Activated CD4-positive, alpha-beta memory T cell treated with anti-CD3 and anti-CD28 coated beads for 36 hours (primary cell): ENCODE measurements at regions of chr9 and their contacts with region 1.

Region 1: DNA sequence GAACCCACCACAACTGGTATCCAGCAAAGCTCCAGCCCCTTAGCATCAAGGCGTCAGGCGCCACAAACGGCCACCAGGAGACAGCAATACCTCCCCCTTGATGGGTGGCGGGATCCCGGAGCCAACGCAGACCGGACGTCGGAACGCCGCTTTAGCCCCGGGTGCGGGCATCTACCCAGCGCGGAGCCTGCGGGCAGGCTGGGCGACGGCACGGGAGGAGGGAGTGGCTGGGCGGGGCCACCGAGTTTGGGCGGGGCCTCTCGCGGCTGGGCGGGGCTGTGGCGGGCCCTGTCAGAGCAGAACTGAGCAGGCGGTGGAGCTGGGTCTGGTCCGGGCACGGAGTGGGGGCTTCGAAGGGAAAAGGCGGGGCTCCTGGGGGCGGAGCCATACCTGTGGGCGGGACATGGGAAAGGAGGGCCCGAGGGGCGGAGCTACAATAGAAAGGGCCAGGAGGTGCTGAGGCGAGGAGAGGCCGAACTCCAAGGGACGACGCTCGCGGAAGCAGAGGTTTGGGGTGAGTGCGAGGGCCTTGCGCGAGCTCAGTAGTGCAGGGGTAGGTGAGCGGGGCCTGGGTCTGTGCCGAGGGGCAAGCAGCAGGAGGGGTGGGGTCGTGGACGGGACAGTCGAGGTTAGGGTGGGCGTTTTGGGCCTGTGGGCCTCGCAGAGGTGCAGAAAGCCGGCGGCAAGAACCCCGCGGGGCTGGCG is 40.2 kb upstream of the GARNL3 start:
- DNase-seq: peak; percentile 91
- H3K4me3 Mint-ChIP-seq: peak overlapping the region; percentile 78
- H3K27ac Mint-ChIP-seq: peak overlapping the region; percentile 79
- H3K4me1 Mint-ChIP-seq: peaks cover 32% of the 10 kb centered on the region
- H3K27me3 Mint-ChIP-seq: peaks cover 10% of the 10 kb centered on the region

Region 2: GRCh38 chr9:127206666-127207065 is 17.7 kb before region 1 on chr9:
- CTCF ChIA-PET with region 1: no interaction called
- POLR2A ChIA-PET with region 1: no interaction called
- intact Hi-C with region 1: no loop called
- DNase-seq: no peak
- H3K4me3 Mint-ChIP-seq: no peak overlapping the region
- H3K27ac Mint-ChIP-seq: no peak overlapping the region
- H3K4me1 Mint-ChIP-seq: no peaks in the 10 kb centered on the region
- H3K27me3 Mint-ChIP-seq: no peaks in the 10 kb centered on the region

Region 3: DNA sequence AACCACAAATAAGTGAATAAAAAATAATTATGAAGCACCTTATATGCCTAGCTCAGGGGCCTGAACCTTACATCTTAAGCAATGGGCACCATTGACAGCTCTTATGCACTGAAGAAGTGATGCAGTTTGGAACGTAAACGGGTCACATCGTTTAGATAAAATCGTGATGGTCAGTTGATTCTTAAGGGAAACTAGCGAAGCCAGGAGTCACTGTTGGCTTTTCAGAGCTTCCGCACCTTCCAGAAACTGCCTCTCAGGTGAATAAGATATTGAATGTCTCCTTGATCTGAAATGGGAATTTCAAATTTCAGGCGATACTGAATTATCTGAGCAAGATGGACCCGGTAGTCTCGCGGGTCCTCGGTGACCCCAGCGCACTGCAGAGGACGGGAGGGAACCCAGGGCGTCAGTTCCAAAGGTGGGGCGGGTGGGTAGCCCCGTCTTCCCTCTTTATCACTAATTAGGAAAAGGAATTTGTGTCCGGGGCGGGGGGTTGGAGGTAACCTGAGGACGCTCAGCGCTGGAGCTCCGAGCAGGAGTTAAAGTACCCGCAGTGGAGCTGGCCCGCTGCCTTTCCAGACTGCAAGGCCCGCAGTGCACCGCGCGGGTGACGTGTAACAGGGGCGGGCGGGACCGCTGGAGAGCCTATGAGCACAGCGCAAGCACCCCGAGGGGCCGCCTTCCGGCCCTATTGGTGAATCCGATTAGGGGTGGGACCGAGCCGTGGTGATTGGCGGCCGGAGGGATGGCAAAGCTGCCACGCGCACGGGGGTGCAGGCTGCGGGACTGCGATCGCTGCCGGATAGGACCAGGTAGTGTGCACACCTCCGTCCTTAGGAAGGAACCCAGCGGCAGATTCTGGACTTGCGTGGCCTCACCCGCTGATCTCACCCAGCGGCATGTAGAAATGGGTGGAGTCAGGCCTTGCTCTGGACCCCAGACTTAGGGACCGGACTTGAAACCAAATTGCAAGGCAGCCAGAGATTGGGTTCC is 20.6 kb after region 1 on chr9:
- CTCF ChIA-PET with region 1: interaction called, 3 read pairs
- POLR2A ChIA-PET with region 1: interaction called, 9 read pairs
- intact Hi-C with region 1: loop called (anchors 1 kb)
- DNase-seq: peak; percentile 97
- H3K4me3 Mint-ChIP-seq: peak overlapping the region; percentile 80
- H3K27ac Mint-ChIP-seq: peak overlapping the region; percentile 20
- H3K4me1 Mint-ChIP-seq: peaks cover 7% of the 10 kb centered on the region
- H3K27me3 Mint-ChIP-seq: no peaks in the 10 kb centered on the region

Region 4: GRCh38 chr9:127396808-127397497 is 172.6 kb after region 1 on chr9 and contains the start of gene SLC2A8:
- CTCF ChIA-PET with region 1: interaction called, 3 read pairs
- POLR2A ChIA-PET with region 1: no interaction called
- intact Hi-C with region 1: loop called (anchors 1 kb)
- DNase-seq: peak; percentile 97
- H3K4me3 Mint-ChIP-seq: peak within 1 kb of the TSS; percentile 60
- H3K27ac Mint-ChIP-seq: no peak within 1 kb of the TSS
- H3K4me1 Mint-ChIP-seq: peaks cover 16% of the 10 kb centered on the region
- H3K27me3 Mint-ChIP-seq: peaks cover 57% of the 10 kb centered on the region
- total RNA-seq, gene SLC2A8: 3.2 to 4.6 TPM